ENCODE measurements at regions of chr10 and their contacts with region 1.

Region 1: GRCh38 chr10:50624866-50625692 is 1.3 kb upstream of the SGMS1 start:
- DNase-seq: peak; percentile 48 to 61
- ATAC-seq: peak; percentile 54 to 59
- H3K4me3 ChIP-seq: peak overlapping the region; percentile 73 to 90 (median 84)
- H3K27ac ChIP-seq: peak overlapping the region; percentile 94 to 100 (median 98)
- H3K4me1 ChIP-seq: peaks cover 15 to 23% of the 10 kb centered on the region in 2 donors
- H3K27me3 ChIP-seq: no peaks in the 10 kb centered on the region
- CTCF ChIP-seq: peak; percentile 57 to 81 (median 70)
- POLR2A ChIP-seq: no peak

Region 2: GRCh38 chr10:49538381-49539319 is 1086.4 kb before region 1 on chr10 and contains the start of gene ERCC6:
- in situ Hi-C with region 1: no loop called
- intact Hi-C with region 1: loop called (anchors 10 kb)
- DNase-seq: peak; percentile 97 to 98
- ATAC-seq: peak; percentile 97 to 99
- H3K4me3 ChIP-seq: peak within 1 kb of the TSS; percentile 78 to 87 (median 83)
- H3K27ac ChIP-seq: peak within 1 kb of the TSS; percentile 87 to 96 (median 90)
- H3K4me1 ChIP-seq: peaks cover 12 to 19% of the 10 kb centered on the region in 2 donors
- H3K27me3 ChIP-seq: no peaks in the 10 kb centered on the region
- CTCF ChIP-seq: peak in 2 of 5 experiments; percentile 21 to 28
- POLR2A ChIP-seq: peak; percentile 68 to 79
- total RNA-seq, gene ERCC6: 8.7 to 16.7 (median 10.5) TPM

Region 3: GRCh38 chr10:50385624-50386023 is 239.5 kb before region 1 on chr10:
- in situ Hi-C with region 1: no loop called
- intact Hi-C with region 1: loop called (anchors 10 kb)
- DNase-seq: peak; percentile 59 to 76
- ATAC-seq: peak; percentile 32 to 82
- H3K4me3 ChIP-seq: no peak overlapping the region
- H3K27ac ChIP-seq: peak overlapping the region; percentile 68 to 83 (median 72)
- H3K4me1 ChIP-seq: peaks cover 50% of the 10 kb centered on the region in 2 donors
- H3K27me3 ChIP-seq: no peaks in the 10 kb centered on the region
- CTCF ChIP-seq: no peak
- POLR2A ChIP-seq: no peak

Region 4: DNA sequence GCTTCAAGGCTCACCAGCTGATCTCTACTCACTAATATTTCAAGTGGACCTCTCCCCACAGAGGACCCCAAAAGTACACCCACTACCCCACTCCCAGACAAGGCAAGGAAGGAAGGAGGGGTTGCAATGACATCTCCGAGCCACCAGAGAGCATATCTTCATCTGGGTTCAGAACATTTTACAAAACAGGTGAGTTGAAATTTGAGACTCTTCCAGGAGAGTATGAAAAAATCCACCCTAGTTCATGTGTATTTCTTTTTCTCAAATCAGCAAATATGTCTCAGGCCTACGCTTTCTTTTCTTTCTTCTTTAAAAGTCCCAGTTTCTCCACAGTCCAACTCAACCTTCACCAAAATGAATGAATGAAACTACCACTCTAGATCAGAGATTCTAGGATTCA is 63.3 kb before region 1 on chr10:
- in situ Hi-C with region 1: no loop called
- intact Hi-C with region 1: loop called (anchors 1 kb)
- DNase-seq: no peak
- ATAC-seq: peak; percentile 60 to 62
- H3K4me3 ChIP-seq: no peak overlapping the region
- H3K27ac ChIP-seq: peak overlapping the region in 1 of 4 donors; percentile 18
- H3K4me1 ChIP-seq: peaks cover 31 to 32% of the 10 kb centered on the region in 2 donors
- H3K27me3 ChIP-seq: no peaks in the 10 kb centered on the region
- CTCF ChIP-seq: peak; percentile 39 to 66 (median 55)
- POLR2A ChIP-seq: no peak

Region 5: GRCh38 chr10:51699475-51700227 is 1074.6 kb after region 1 on chr10 and contains the start of gene CSTF2T:
- in situ Hi-C with region 1: no loop called
- intact Hi-C with region 1: loop called (anchors 2 kb)
- DNase-seq: peak; percentile 85 to 86
- ATAC-seq: peak; percentile 96 to 98
- H3K4me3 ChIP-seq: peak within 1 kb of the TSS; percentile 64 to 94 (median 77)
- H3K27ac ChIP-seq: peak within 1 kb of the TSS; percentile 92 to 94 (median 93)
- H3K4me1 ChIP-seq: peaks cover 41 to 44% of the 10 kb centered on the region in 2 donors
- H3K27me3 ChIP-seq: no peaks in the 10 kb centered on the region
- CTCF ChIP-seq: no peak
- POLR2A ChIP-seq: peak; percentile 43 to 50
- total RNA-seq, gene CSTF2T: 11.4 to 22.2 (median 16.3) TPM